Posterior cingulate gyrus (tissue), 11 donors: ENCODE measurements at regions of chr5 and their contacts with region 1.

Region 1: DNA sequence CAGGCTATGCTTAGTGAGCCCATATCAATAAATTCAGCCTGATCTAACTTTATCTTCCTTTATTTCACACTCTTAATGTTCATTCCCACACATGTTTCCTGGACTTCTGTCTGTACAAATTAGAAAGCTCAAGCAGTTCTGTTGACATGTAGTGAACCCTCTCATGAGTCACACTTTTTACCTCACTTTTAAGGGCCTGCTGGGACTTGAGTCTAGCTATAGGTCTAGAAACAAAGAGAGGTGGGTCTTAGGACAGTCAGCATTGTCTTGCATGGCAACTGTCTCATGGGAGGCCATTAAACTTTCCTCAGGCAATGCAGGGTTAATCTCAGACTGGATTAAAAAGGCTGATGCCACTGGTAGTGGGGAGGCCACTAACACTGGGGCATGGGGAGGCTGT is 8.6 kb upstream of the CCNH start:
- DNase-seq: no peak

Region 2: DNA sequence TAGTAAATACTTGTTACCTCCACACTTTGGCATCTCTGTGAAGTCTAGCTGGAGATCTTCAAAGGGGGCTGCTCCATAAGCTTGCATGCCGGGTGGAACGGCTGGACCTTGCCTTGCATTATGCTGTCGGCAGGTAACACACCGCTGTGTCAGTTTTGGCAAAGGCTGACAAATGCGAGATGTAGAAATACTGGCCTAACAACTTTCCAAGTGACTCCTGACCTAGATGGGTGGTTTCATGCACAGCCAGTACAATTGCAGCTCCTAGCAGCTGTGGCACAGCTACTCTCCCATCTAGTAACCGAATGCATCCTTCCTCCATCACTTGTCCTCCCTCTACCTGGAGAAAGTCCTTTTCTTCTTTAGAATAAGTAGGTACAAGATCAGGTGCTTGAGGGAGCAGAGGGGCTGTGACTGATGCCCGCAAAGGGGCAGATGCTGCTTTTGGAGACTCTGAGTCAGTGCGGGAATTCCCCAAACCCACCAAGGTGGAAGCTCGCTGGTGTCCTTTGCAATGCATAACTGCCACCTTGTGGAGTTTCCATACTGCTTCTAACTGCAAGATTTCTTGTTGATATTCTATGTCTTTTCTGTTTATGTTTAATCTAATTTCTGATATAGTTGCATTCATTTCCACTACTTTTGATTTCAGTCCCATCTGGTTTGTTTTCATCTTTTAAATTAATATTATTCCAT is 769.0 kb after region 1 on chr5:
- intact Hi-C with region 1: loop called (anchors 10 kb)
- DNase-seq: peak in 6 of 10 donors; percentile 21 to 86 (median 40)